Activated naive CD4-positive, alpha-beta T cell treated with anti-CD3 and anti-CD28 coated beads for 36 hours (primary cell): ENCODE measurements at regions of chr6 and their contacts with region 1.

Region 1: GRCh38 chr6:11460001-11460668 is 77.4 kb upstream of the TMEM170B start:
- DNase-seq: peak; percentile 22
- H3K4me3 Mint-ChIP-seq: peak overlapping the region; percentile 61
- H3K27ac Mint-ChIP-seq: peak overlapping the region; percentile 97
- H3K4me1 Mint-ChIP-seq: peaks cover 40% of the 10 kb centered on the region
- H3K27me3 Mint-ChIP-seq: peaks cover 2% of the 10 kb centered on the region

Region 2: GRCh38 chr6:10621213-10621612 is 838.9 kb before region 1 on chr6:
- CTCF ChIA-PET with region 1: no interaction called
- intact Hi-C with region 1: no loop called
- DNase-seq: no peak
- H3K4me3 Mint-ChIP-seq: no peak overlapping the region
- H3K27ac Mint-ChIP-seq: no peak overlapping the region
- H3K4me1 Mint-ChIP-seq: no peaks in the 10 kb centered on the region
- H3K27me3 Mint-ChIP-seq: no peaks in the 10 kb centered on the region

Region 3: DNA sequence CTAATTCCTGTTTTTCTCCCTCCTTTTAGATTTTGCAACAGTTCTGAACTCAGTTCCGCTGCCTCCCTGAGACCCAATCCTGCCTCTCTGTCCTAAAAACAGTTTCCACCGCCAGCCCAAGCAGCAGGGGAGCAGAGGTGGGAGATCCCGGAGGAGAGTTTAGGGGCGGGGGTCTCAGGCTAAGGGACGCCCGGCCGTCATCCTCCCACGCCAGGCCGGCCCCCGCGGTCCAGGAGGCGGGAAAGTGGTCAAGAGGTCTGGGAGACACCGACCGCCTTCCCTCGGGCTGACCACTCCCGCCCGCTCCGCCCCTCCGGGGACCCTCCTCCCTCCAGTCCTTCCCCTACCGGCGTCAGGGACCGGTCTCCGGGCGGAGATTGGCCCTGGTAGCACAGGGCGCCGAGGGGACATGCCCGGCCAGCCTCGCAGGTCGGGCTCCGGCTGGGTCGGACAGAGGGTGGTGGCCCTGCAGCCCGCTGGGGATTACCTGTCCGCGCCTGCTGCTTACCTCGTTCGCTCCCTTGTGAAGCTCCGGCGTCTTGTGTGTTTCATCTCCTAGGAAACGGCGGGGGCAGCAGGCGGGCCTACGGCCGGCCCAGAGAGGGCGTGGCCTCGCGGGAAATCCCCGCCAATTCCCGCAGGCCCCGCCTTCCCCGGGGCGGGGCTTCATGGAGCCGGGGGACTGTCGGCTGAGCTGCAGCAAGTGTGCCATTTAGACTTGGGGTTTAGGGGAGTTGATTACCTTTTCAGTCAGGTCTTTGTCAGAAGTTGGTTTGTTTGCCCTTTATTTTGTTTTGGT is 621.9 kb before region 1 on chr6 and contains the start of gene MAK:
- CTCF ChIA-PET with region 1: no interaction called
- intact Hi-C with region 1: loop called (anchors 5 kb)
- DNase-seq: peak; percentile 86
- H3K4me3 Mint-ChIP-seq: peak within 1 kb of the TSS; percentile 74
- H3K27ac Mint-ChIP-seq: peak within 1 kb of the TSS; percentile 85
- H3K4me1 Mint-ChIP-seq: peaks cover 17% of the 10 kb centered on the region
- H3K27me3 Mint-ChIP-seq: peaks cover 50% of the 10 kb centered on the region
- total RNA-seq, gene MAK: 0.12 to 0.14 TPM

Region 4: GRCh38 chr6:11277275-11278206 is 182.6 kb before region 1 on chr6:
- CTCF ChIA-PET with region 1: no interaction called
- intact Hi-C with region 1: loop called (anchors 1 kb)
- DNase-seq: peak; percentile 48
- H3K4me3 Mint-ChIP-seq: peak overlapping the region; percentile 3
- H3K27ac Mint-ChIP-seq: peak overlapping the region; percentile 74
- H3K4me1 Mint-ChIP-seq: peaks cover 42% of the 10 kb centered on the region
- H3K27me3 Mint-ChIP-seq: no peaks in the 10 kb centered on the region

Region 5: GRCh38 chr6:11353921-11354389 is 106.2 kb before region 1 on chr6:
- CTCF ChIA-PET with region 1: interaction called, 14 read pairs
- intact Hi-C with region 1: loop called (anchors 1 kb)
- DNase-seq: peak; percentile 93
- H3K4me3 Mint-ChIP-seq: peak overlapping the region; percentile 54
- H3K27ac Mint-ChIP-seq: peak overlapping the region; percentile 96
- H3K4me1 Mint-ChIP-seq: peaks cover 82% of the 10 kb centered on the region
- H3K27me3 Mint-ChIP-seq: no peaks in the 10 kb centered on the region

Region 6: GRCh38 chr6:11414176-11414963 is 45.8 kb before region 1 on chr6:
- CTCF ChIA-PET with region 1: interaction called, 7 read pairs
- intact Hi-C with region 1: loop called (anchors 1 kb)
- DNase-seq: peak; percentile 60
- H3K4me3 Mint-ChIP-seq: no peak overlapping the region
- H3K27ac Mint-ChIP-seq: no peak overlapping the region
- H3K4me1 Mint-ChIP-seq: peaks cover 33% of the 10 kb centered on the region
- H3K27me3 Mint-ChIP-seq: no peaks in the 10 kb centered on the region

Region 7: DNA sequence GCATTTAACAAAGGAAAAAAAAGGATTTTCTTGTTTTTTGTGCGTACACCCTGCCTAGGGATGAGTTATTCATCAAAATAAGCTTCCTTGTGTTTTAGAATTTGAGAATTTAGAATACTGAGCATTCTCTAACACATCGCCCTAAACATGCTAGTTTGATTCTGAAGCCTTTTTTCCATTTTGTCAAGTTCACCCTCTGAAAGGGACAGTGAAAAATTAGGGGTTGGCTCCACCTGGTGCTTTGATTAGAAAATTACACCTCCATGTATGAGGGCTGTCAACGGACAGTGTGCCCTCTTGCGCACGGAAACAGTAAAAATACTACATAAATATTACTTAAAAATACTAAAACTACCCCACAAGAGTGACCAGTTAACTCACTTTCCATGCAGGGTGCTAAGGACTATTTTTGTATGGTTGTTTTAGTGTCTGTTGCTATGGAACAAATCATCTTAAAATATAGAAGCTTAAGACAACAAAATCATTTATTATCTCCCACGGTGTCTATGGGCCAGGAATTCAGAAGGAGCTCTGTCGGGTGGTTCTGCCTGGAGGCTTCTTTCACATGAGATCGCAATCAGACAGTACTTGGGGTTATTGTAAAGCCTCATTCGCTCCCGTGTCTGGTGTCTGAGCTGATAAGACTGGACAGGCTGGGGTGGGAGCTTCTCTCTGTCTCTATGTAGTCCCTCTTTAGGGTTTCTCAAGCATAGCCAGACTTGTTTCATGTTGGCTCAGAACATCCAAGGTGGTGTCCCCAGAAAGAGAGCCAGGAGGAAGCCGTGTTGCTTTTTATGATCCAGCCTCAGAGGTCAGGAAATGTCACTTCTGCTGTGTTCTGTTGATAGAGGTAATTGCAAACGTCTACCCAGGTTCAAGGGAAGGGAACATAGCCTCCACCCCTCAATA is 36.3 kb after region 1 on chr6:
- CTCF ChIA-PET with region 1: interaction called, 25 read pairs
- intact Hi-C with region 1: loop called (anchors 1 kb)
- DNase-seq: peak; percentile 87
- H3K4me3 Mint-ChIP-seq: no peak overlapping the region
- H3K27ac Mint-ChIP-seq: no peak overlapping the region
- H3K4me1 Mint-ChIP-seq: peaks cover 13% of the 10 kb centered on the region
- H3K27me3 Mint-ChIP-seq: no peaks in the 10 kb centered on the region

Region 8: DNA sequence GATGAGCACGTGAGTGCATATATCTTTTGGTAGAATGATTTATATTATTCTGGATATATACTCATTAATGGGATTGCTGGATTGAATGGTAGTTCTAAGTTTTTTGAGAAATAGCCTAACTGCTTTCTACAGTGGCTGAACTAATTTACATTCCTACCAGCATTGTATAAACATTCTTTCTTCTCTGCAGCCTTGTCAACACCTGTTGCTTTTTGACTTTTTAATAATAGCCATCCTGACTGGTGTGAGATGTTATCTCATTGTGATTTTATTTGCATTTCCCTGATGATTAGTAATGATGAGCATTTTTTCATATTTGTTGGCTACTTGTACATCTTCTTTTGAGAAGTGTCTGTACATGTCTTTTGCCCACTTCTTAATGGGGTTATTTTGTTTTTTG is 202.2 kb after region 1 on chr6:
- CTCF ChIA-PET with region 1: no interaction called
- intact Hi-C with region 1: no loop called
- DNase-seq: no peak
- H3K4me3 Mint-ChIP-seq: no peak overlapping the region
- H3K27ac Mint-ChIP-seq: no peak overlapping the region
- H3K4me1 Mint-ChIP-seq: peaks cover 3% of the 10 kb centered on the region
- H3K27me3 Mint-ChIP-seq: no peaks in the 10 kb centered on the region

Region 9: GRCh38 chr6:12060780-12061619 is 600.9 kb after region 1 on chr6:
- CTCF ChIA-PET with region 1: no interaction called
- intact Hi-C with region 1: loop called (anchors 5 kb)
- DNase-seq: peak; percentile 84
- H3K4me3 Mint-ChIP-seq: peak overlapping the region; percentile 69
- H3K27ac Mint-ChIP-seq: peak overlapping the region; percentile 69
- H3K4me1 Mint-ChIP-seq: peaks cover 72% of the 10 kb centered on the region
- H3K27me3 Mint-ChIP-seq: no peaks in the 10 kb centered on the region